SK-N-SH (cell line): ENCODE measurements at regions of chr5 and their contacts with region 1.

Region 1: DNA sequence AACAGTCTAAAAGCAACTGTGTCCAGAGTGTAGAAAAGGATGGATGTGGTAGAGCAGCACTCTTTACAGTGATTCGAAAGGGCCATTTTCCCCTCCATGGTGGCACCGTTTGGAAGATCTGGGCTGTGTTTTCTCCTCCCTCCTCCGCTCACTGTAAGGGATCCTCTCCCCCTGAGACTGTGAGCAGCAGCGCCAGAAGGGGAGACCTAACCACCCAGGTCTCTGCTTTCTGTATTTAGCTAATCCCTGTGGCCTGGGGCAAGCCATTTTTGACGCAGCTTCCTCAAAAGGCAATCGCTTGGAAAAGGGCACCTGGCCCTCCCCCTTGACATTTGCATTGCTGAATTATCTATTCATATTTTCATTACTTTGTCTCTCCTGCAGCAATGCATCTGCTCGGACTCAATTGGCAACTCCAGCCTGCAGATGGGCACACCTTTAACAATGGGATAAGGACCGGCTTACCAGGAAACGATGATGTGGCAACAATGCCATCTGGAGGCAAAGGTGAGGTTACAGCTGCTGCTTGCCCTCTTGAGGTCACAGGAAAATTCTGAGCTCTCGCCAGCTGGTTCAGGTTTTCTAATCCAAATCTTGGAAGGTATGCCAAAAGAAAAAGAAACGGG is 244.3 kb upstream of the WWC1 start:
- DNase-seq: peak; percentile 75
- H3K4me3 ChIP-seq: no peak overlapping the region
- H3K27ac ChIP-seq: no peak overlapping the region; a peak in 1 of 4 replicates
- H3K4me1 ChIP-seq: peaks cover 0 to 13% of the 10 kb centered on the region in 2 experiments; a peak in 2 of 4 replicates
- H3K27me3 ChIP-seq: no peaks in the 10 kb centered on the region
- CTCF ChIP-seq: peak; percentile 62
- EP300 ChIP-seq: no peak
- RAD21 ChIP-seq: peak; percentile 92

Region 2: GRCh38 chr5:167582283-167582682 is 464.9 kb before region 1 on chr5:
- CTCF ChIA-PET with region 1: interaction called, 17 read pairs
- POLR2A ChIA-PET with region 1: no interaction called
- DNase-seq: peak; percentile 25
- H3K4me3 ChIP-seq: no peak overlapping the region
- H3K27ac ChIP-seq: no peak overlapping the region
- H3K4me1 ChIP-seq: no peaks in the 10 kb centered on the region; a peak in 1 of 4 replicates
- H3K27me3 ChIP-seq: peaks cover under 1% of the 10 kb centered on the region; the same call in 1 of the 2 replicates
- CTCF ChIP-seq: peak; percentile 65
- EP300 ChIP-seq: no peak
- RAD21 ChIP-seq: peak; percentile 71

Region 3: GRCh38 chr5:167603135-167603534 is 444.0 kb before region 1 on chr5:
- CTCF ChIA-PET with region 1: no interaction called
- POLR2A ChIA-PET with region 1: no interaction called
- DNase-seq: no peak
- H3K4me3 ChIP-seq: no peak overlapping the region
- H3K27ac ChIP-seq: no peak overlapping the region
- H3K4me1 ChIP-seq: no peaks in the 10 kb centered on the region
- H3K27me3 ChIP-seq: no peaks in the 10 kb centered on the region
- CTCF ChIP-seq: no peak
- EP300 ChIP-seq: no peak
- RAD21 ChIP-seq: no peak

Region 4: GRCh38 chr5:167723254-167723871 is 323.8 kb before region 1 on chr5:
- CTCF ChIA-PET with region 1: interaction called, 46 read pairs
- POLR2A ChIA-PET with region 1: no interaction called
- DNase-seq: peak; percentile 74
- H3K4me3 ChIP-seq: peak overlapping the region in 1 of 2 experiments; percentile 17; a peak in 1 of 4 replicates
- H3K27ac ChIP-seq: no peak overlapping the region
- H3K4me1 ChIP-seq: peaks cover 0 to 4% of the 10 kb centered on the region in 2 experiments; a peak in 2 of 4 replicates
- H3K27me3 ChIP-seq: no peaks in the 10 kb centered on the region
- CTCF ChIP-seq: peak; percentile 90
- EP300 ChIP-seq: no peak
- RAD21 ChIP-seq: peak; percentile 83

Region 5: DNA sequence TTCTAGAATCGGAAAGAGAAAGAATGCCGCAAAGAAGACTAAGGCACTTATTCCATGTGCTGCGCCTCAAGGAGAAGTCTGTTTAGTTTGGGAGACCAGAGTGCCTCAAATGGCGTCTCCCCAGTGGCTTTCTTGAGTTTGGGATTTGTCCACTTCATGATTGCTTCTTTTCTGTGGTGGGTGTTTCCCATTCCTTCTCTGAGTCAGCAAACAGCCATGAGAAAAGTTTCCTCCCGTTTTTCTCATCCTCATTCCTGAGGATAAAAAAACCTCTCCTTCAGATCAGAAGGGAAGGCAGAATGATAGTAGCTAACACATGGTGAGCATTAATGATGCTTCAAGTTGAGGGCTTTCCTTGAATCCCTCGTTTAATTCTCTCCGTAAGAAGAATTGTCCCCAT is 31.6 kb before region 1 on chr5:
- CTCF ChIA-PET with region 1: interaction called, 14 read pairs
- POLR2A ChIA-PET with region 1: no interaction called
- DNase-seq: no peak
- H3K4me3 ChIP-seq: no peak overlapping the region
- H3K27ac ChIP-seq: no peak overlapping the region
- H3K4me1 ChIP-seq: no peaks in the 10 kb centered on the region; a peak in 2 of 4 replicates
- H3K27me3 ChIP-seq: no peaks in the 10 kb centered on the region
- CTCF ChIP-seq: no peak
- EP300 ChIP-seq: no peak
- RAD21 ChIP-seq: no peak

Region 6: DNA sequence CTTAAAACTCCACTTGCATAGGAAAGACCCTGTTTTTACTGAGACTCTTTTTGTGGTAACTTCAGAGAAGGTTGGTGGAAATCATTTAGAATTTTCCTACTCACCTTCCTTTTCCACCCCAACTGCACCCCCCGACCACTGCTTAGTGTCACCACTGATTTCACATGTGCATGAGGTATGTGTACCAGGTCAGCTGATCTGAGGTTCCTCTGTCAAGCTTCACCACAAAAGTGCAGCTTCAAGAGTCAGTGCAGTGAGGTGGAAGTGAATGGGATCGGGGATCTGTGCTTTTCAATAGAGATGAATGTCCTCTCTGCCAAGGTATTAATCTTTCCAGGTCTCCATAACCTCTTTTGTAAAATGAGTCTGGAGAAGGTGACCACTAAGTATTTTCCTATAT is 16.2 kb before region 1 on chr5:
- CTCF ChIA-PET with region 1: interaction called, 11 read pairs
- POLR2A ChIA-PET with region 1: no interaction called
- DNase-seq: no peak
- H3K4me3 ChIP-seq: no peak overlapping the region
- H3K27ac ChIP-seq: no peak overlapping the region
- H3K4me1 ChIP-seq: no peaks in the 10 kb centered on the region; a peak in 1 of 4 replicates
- H3K27me3 ChIP-seq: no peaks in the 10 kb centered on the region
- CTCF ChIP-seq: no peak
- EP300 ChIP-seq: no peak
- RAD21 ChIP-seq: no peak

Region 7: GRCh38 chr5:168076561-168076991 is 29.4 kb after region 1 on chr5:
- CTCF ChIA-PET with region 1: interaction called, 14 read pairs
- POLR2A ChIA-PET with region 1: no interaction called
- DNase-seq: peak; percentile 54
- H3K4me3 ChIP-seq: peak overlapping the region in 1 of 2 experiments; percentile 31; a peak in 1 of 4 replicates
- H3K27ac ChIP-seq: no peak overlapping the region
- H3K4me1 ChIP-seq: peaks cover 0 to 4% of the 10 kb centered on the region in 2 experiments; a peak in 2 of 4 replicates
- H3K27me3 ChIP-seq: no peaks in the 10 kb centered on the region
- CTCF ChIP-seq: peak; percentile 61
- EP300 ChIP-seq: no peak
- RAD21 ChIP-seq: peak; percentile 63

Region 8: GRCh38 chr5:168219515-168220410 is 172.6 kb after region 1 on chr5:
- CTCF ChIA-PET with region 1: interaction called, 40 read pairs
- POLR2A ChIA-PET with region 1: no interaction called
- DNase-seq: peak; percentile 80
- H3K4me3 ChIP-seq: peak overlapping the region in 1 of 2 experiments; percentile 36; a peak in 2 of 4 replicates
- H3K27ac ChIP-seq: no peak overlapping the region
- H3K4me1 ChIP-seq: peaks cover 0 to 4% of the 10 kb centered on the region in 2 experiments; a peak in 1 of 4 replicates
- H3K27me3 ChIP-seq: peaks cover 7% of the 10 kb centered on the region; the same call in 1 of the 2 replicates
- CTCF ChIP-seq: peak; percentile 90
- EP300 ChIP-seq: no peak
- RAD21 ChIP-seq: peak; percentile 97

Region 9: GRCh38 chr5:169100421-169101075 is 1053.4 kb after region 1 on chr5:
- CTCF ChIA-PET with region 1: no interaction called
- POLR2A ChIA-PET with region 1: no interaction called
- DNase-seq: no peak
- H3K4me3 ChIP-seq: no peak overlapping the region
- H3K27ac ChIP-seq: peak overlapping the region in 1 of 2 experiments; percentile 98; a peak in 2 of 4 replicates
- H3K4me1 ChIP-seq: peaks cover 0 to 51% of the 10 kb centered on the region in 2 experiments; a peak in 3 of 4 replicates
- H3K27me3 ChIP-seq: no peaks in the 10 kb centered on the region
- CTCF ChIP-seq: no peak
- EP300 ChIP-seq: no peak
- RAD21 ChIP-seq: no peak